GM12878 (cell line): ENCODE measurements at regions of chr20 and their contacts with region 1.

Region 1: DNA sequence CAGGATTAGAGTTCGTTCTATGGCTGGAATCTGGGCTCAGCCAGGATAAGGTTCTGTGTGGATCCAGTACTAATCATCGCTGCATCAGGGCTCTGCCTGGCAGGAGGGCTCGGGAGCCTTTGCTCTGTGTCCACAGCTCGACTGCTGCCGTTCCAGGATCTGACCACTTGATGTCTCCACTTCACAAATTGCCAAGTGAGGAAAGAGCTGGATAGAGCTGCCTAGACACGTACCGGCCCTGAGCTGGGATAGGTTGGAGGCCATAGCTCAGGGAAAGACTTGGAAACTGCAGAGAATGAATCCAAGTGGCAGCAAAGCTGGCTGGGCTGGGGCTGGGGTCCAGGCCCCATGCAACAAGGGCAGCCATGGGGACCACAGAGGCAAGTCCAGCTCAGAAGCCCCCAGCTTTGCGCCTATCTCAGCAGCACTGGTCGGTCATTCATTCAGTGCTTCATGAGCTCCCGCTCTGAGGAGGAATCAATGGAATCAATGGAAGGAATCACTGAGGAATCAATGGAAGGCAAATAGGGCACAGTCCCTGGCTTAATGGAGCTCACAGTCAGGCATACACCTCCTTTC is 38.0 kb upstream of the TOP1 start:
- DNase-seq: peak; percentile 70
- ATAC-seq: peak; percentile 87
- H3K4me3 ChIP-seq: peak overlapping the region; percentile 33; the same call in 1 of the 2 replicates
- H3K27ac ChIP-seq: peak overlapping the region; percentile 98
- H3K4me1 ChIP-seq: peaks cover 39% of the 10 kb centered on the region
- H3K27me3 ChIP-seq: no peaks in the 10 kb centered on the region
- CTCF ChIP-seq: peak; percentile 85 to 95 (median 90)
- EP300 ChIP-seq: no peak
- POLR2A ChIP-seq: no peak
- RAD21 ChIP-seq: peak; percentile 96

Region 2: GRCh38 chr20:41003143-41003883 is 12.7 kb after region 1 on chr20:
- CTCF ChIA-PET with region 1: interaction called, 256 read pairs
- POLR2A ChIA-PET with region 1: interaction called, 106 read pairs
- RAD21 ChIA-PET with region 1: interaction called, 187 read pairs
- SMC1A ChIA-PET with region 1: interaction called, 333 read pairs
- in situ Hi-C with region 1: no loop called
- intact Hi-C with region 1: no loop called
- DNase-seq: no peak
- ATAC-seq: peak; percentile 81
- H3K4me3 ChIP-seq: no peak overlapping the region
- H3K27ac ChIP-seq: peak overlapping the region; percentile 78
- H3K4me1 ChIP-seq: peaks cover 27% of the 10 kb centered on the region
- H3K27me3 ChIP-seq: no peaks in the 10 kb centered on the region
- CTCF ChIP-seq: no peak
- EP300 ChIP-seq: no peak
- POLR2A ChIP-seq: no peak
- RAD21 ChIP-seq: no peak

Region 3: DNA sequence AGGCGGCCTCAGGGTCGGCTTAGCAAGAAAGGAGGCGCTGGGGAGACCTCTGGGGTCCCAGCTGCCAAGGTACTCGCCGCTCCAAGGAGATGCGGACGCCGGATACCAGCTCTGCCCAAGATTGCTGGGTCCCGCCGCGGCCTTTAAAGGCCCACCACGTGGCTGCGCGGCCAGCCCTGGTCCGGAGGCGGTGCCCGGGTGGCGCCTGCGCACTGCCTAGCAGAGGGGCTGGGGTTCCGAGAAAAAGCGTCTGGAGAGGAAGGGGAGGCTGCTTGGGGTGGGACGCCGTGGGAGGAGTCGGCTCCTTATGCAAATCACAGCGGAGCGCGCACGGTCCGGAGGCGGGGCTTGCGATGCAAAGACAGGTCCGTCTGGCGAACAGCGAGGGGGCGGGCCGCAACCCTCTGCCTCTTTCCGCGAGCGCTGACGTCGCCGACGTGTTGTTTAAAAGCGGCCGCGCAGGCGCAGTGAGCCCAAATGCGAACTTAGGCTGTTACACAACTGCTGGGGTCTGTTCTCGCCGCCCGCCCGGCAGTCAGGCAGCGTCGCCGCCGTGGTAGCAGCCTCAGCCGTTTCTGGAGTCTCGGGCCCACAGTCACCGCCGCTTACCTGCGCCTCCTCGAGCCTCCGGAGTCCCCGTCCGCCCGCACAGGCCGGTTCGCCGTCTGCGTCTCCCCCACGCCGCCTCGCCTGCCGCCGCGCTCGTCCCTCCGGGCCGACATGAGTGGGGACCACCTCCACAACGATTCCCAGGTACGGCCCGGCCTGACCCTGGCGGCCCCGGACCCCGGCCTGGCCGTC is 37.9 kb after region 1 on chr20 and contains the start of gene TOP1:
- CTCF ChIA-PET with region 1: interaction called, 510 read pairs
- POLR2A ChIA-PET with region 1: interaction called, 67 read pairs
- RAD21 ChIA-PET with region 1: interaction called, 696 read pairs
- SMC1A ChIA-PET with region 1: interaction called, 143 read pairs
- in situ Hi-C with region 1: no loop called
- intact Hi-C with region 1: loop called (anchors 1 kb)
- DNase-seq: peak; percentile 98
- ATAC-seq: peak; percentile 93
- H3K4me3 ChIP-seq: peak within 1 kb of the TSS; percentile 97
- H3K27ac ChIP-seq: peak within 1 kb of the TSS; percentile 95
- H3K4me1 ChIP-seq: peaks cover 5% of the 10 kb centered on the region
- H3K27me3 ChIP-seq: no peaks in the 10 kb centered on the region
- CTCF ChIP-seq: no peak
- EP300 ChIP-seq: no peak
- POLR2A ChIP-seq: peak; percentile 96
- RAD21 ChIP-seq: no peak
- polyA plus RNA-seq, gene TOP1: 36.1 to 47.6 TPM

Region 4: DNA sequence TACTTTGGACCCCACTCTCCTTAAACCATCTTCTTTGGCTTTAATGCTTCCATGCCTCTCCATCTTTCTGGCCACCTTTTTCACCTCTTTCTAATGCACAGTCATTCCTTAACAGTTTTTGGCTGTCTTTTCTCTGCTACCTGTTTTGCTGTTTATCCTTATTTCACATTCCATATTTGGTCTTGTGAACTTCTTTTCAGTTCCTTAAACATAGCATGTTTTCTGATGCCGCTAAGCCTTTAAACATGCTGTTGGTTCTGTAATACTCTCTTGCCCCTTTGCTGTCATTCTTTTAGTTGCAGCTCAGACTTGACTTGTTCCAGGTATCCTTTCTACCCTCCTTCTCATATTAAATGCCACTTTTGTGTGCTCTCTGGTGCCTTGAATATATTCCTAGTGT is 73.7 kb after region 1 on chr20:
- CTCF ChIA-PET with region 1: interaction called, 281 read pairs
- POLR2A ChIA-PET with region 1: interaction called, 33 read pairs
- RAD21 ChIA-PET with region 1: interaction called, 180 read pairs
- SMC1A ChIA-PET with region 1: interaction called, 231 read pairs
- in situ Hi-C with region 1: no loop called
- intact Hi-C with region 1: loop called (anchors 1 kb)
- DNase-seq: peak; percentile 68
- ATAC-seq: peak; percentile 93
- H3K4me3 ChIP-seq: no peak overlapping the region
- H3K27ac ChIP-seq: peak overlapping the region; percentile 62
- H3K4me1 ChIP-seq: peaks cover 20% of the 10 kb centered on the region
- H3K27me3 ChIP-seq: no peaks in the 10 kb centered on the region
- CTCF ChIP-seq: peak; percentile 8 to 59 (median 36); a peak in 3 of 6 replicates
- EP300 ChIP-seq: no peak; a peak in 1 of 4 replicates
- POLR2A ChIP-seq: no peak
- RAD21 ChIP-seq: peak; percentile 77

Region 5: GRCh38 chr20:41095110-41095969 is 104.7 kb after region 1 on chr20:
- CTCF ChIA-PET with region 1: interaction called, 326 read pairs
- POLR2A ChIA-PET with region 1: interaction called, 24 read pairs
- RAD21 ChIA-PET with region 1: interaction called, 111 read pairs
- SMC1A ChIA-PET with region 1: interaction called, 161 read pairs
- in situ Hi-C with region 1: no loop called
- intact Hi-C with region 1: loop called (anchors 1 kb)
- DNase-seq: no peak
- ATAC-seq: peak; percentile 88
- H3K4me3 ChIP-seq: no peak overlapping the region
- H3K27ac ChIP-seq: no peak overlapping the region
- H3K4me1 ChIP-seq: no peaks in the 10 kb centered on the region
- H3K27me3 ChIP-seq: no peaks in the 10 kb centered on the region
- CTCF ChIP-seq: peak; percentile 74 to 85 (median 84)
- EP300 ChIP-seq: no peak
- POLR2A ChIP-seq: no peak
- RAD21 ChIP-seq: peak; percentile 85

Region 6: DNA sequence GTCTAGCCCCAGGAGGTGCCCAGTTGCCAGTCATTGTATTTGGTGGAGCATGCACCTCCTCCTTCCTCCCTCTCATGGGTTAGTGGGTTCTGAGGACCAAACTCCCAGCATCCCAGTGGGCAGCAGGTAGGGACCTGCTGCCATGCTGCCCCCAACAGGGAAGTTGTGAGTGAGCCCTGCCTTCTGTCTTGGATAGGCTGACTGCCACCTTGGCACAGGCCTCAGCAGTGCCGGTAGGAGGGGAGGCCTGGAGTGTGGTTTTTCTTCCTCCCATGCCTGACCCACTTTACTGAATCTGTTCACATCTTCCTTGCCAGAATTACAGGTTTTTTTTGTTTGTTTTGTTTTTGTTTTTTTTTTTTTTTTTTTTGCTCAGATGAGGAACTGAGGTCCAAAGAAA is 171.3 kb after region 1 on chr20:
- CTCF ChIA-PET with region 1: interaction called, 19 read pairs
- POLR2A ChIA-PET with region 1: interaction called, 4 read pairs
- RAD21 ChIA-PET with region 1: interaction called, 14 read pairs
- SMC1A ChIA-PET with region 1: interaction called, 8 read pairs
- in situ Hi-C with region 1: no loop called
- intact Hi-C with region 1: no loop called
- DNase-seq: no peak
- ATAC-seq: no peak
- H3K4me3 ChIP-seq: no peak overlapping the region
- H3K27ac ChIP-seq: no peak overlapping the region
- H3K4me1 ChIP-seq: peaks cover 19% of the 10 kb centered on the region
- H3K27me3 ChIP-seq: no peaks in the 10 kb centered on the region
- CTCF ChIP-seq: no peak
- EP300 ChIP-seq: no peak
- POLR2A ChIP-seq: no peak
- RAD21 ChIP-seq: no peak

Region 7: GRCh38 chr20:41205313-41205712 is 214.7 kb after region 1 on chr20:
- CTCF ChIA-PET with region 1: no interaction called
- POLR2A ChIA-PET with region 1: no interaction called
- RAD21 ChIA-PET with region 1: no interaction called
- SMC1A ChIA-PET with region 1: no interaction called
- in situ Hi-C with region 1: no loop called
- intact Hi-C with region 1: no loop called
- DNase-seq: no peak
- ATAC-seq: no peak
- H3K4me3 ChIP-seq: no peak overlapping the region
- H3K27ac ChIP-seq: no peak overlapping the region
- H3K4me1 ChIP-seq: no peaks in the 10 kb centered on the region
- H3K27me3 ChIP-seq: no peaks in the 10 kb centered on the region
- CTCF ChIP-seq: no peak
- EP300 ChIP-seq: no peak
- POLR2A ChIP-seq: no peak
- RAD21 ChIP-seq: no peak